ENCODE measurements at regions of chr2 and their contacts with region 1.

Region 1: GRCh38 chr2:197113275-197113711 is 186.8 kb upstream of the PGAP1 start:
- DNase-seq: no peak
- H3K4me3 ChIP-seq: no peak overlapping the region
- H3K27ac ChIP-seq: no peak overlapping the region
- H3K27me3 ChIP-seq: no peaks in the 10 kb centered on the region
- CTCF ChIP-seq: peak; percentile 63

Region 2: DNA sequence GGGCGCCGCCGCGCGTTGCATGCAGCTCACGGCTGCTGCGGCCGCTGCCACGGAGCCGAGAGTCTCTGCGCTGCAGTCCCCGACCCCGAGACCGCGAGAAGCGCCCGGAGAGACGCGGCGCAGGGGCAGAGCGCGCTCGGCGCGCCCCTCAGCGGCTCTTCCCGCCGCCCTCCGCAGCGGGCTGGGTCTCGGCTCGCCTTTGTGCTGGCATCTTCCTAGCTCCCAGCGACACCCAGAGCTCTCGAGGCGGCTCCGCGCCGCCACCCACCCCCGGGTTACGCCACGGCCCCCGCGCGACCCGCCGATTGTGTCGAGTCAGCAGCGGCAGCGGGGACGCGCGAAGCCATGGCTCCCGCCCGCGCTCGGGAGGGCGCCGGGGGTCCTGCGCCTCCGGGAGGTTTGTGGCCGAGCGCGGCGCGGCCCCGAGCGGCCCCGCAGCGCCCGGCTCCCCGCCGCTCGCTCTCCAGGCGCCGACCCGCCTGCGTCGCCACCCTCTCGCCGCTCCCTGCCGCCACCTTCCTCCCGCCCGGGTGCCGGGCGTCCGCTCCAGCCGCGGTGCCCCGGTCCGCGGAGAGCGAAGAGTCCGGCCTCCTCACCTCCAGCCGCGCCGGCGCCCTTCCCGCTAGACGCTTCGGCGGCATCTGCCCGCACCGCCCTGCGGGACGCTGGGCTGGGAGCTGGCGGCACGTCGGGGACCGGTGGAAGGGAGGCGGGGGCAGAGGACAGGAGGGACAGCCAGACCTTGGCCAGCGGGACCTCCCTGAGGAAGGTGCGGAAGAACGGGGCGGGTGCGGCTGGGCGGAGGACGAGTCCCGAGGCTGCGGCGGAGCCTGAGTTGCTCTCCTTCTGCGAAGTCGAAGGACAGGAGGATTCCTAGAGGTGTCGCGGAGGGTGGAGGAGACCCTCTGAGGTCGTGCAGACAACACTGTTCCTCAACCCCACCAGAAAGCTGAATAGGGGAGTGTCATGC is 520.1 kb before region 1 on chr2:
- CTCF ChIA-PET with region 1: no interaction called
- POLR2A ChIA-PET with region 1: no interaction called
- DNase-seq: no peak
- H3K4me3 ChIP-seq: peak within 1 kb of the TSS; percentile 75
- H3K27ac ChIP-seq: peak within 1 kb of the TSS; percentile 21
- H3K27me3 ChIP-seq: no peaks in the 10 kb centered on the region
- CTCF ChIP-seq: no peak

Region 3: DNA sequence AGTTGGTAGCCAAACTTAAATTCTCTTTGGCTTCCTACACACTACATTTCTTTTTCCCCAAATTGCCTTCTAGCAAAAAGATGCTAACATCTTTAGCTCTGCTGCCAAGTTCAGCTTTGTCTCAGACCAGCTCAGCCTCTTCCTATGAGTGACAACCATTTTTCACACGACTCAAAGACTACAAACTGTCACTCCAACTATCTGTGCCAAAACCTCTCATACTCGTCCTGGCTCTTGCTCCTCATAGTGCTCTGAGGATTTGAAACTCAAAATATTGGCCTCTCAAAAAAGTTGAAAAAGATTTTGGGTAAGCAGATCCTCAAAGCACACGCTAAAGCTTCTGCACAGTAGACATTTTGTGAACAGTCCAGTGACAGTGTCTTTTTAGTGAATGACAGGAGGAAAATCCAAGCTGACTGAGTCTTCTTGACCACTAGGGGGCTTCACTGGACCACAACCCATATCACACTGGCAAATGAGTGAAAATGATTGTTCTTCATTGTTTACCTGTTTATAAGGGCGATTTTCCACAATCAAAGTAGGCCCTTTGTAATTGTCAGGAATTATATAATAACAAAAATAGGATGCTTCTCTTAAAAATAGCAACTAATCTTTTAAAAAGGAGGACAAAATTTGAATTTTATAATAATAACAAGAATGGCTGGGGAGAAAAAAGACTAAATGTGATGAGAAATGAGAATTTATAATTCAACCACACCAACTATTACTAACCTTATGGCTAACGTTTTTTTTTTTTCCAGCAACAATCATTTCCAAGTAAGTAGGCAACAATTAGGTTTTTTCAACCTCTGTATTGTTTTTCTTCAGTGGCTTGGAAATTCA is 101.3 kb before region 1 on chr2:
- CTCF ChIA-PET with region 1: interaction called, 11 read pairs
- POLR2A ChIA-PET with region 1: no interaction called
- DNase-seq: no peak
- H3K4me3 ChIP-seq: no peak overlapping the region
- H3K27ac ChIP-seq: no peak overlapping the region
- H3K27me3 ChIP-seq: no peaks in the 10 kb centered on the region
- CTCF ChIP-seq: peak; percentile 91

Region 4: GRCh38 chr2:197097578-197098366 is 15.5 kb before region 1 on chr2:
- CTCF ChIA-PET with region 1: interaction called, 34 read pairs
- POLR2A ChIA-PET with region 1: no interaction called
- DNase-seq: peak; percentile 77
- H3K4me3 ChIP-seq: no peak overlapping the region
- H3K27ac ChIP-seq: no peak overlapping the region
- H3K27me3 ChIP-seq: no peaks in the 10 kb centered on the region
- CTCF ChIP-seq: no peak

Region 5: GRCh38 chr2:197152451-197153228 is 39.3 kb after region 1 on chr2:
- CTCF ChIA-PET with region 1: interaction called, 17 read pairs
- POLR2A ChIA-PET with region 1: no interaction called
- DNase-seq: no peak
- H3K4me3 ChIP-seq: no peak overlapping the region
- H3K27ac ChIP-seq: peak overlapping the region; percentile 43
- H3K27me3 ChIP-seq: no peaks in the 10 kb centered on the region
- CTCF ChIP-seq: peak; percentile 40

Region 6: GRCh38 chr2:197179744-197180498 is 66.6 kb after region 1 on chr2:
- CTCF ChIA-PET with region 1: interaction called, 18 read pairs
- POLR2A ChIA-PET with region 1: no interaction called
- DNase-seq: peak; percentile 52
- H3K4me3 ChIP-seq: no peak overlapping the region
- H3K27ac ChIP-seq: peak overlapping the region; percentile 79
- H3K27me3 ChIP-seq: no peaks in the 10 kb centered on the region
- CTCF ChIP-seq: no peak

Region 7: GRCh38 chr2:197310271-197310985 is 197.1 kb after region 1 on chr2 and contains the start of gene ANKRD44:
- CTCF ChIA-PET with region 1: interaction called, 25 read pairs
- POLR2A ChIA-PET with region 1: no interaction called
- DNase-seq: peak; percentile 55
- H3K4me3 ChIP-seq: peak within 1 kb of the TSS; percentile 75
- H3K27ac ChIP-seq: no peak within 1 kb of the TSS
- H3K27me3 ChIP-seq: no peaks in the 10 kb centered on the region
- CTCF ChIP-seq: peak; percentile 10; the same call in 1 of the 2 replicates
- polyA plus RNA-seq, gene ANKRD44: 12.1 and 14.7 TPM in 2 replicates

Region 8: DNA sequence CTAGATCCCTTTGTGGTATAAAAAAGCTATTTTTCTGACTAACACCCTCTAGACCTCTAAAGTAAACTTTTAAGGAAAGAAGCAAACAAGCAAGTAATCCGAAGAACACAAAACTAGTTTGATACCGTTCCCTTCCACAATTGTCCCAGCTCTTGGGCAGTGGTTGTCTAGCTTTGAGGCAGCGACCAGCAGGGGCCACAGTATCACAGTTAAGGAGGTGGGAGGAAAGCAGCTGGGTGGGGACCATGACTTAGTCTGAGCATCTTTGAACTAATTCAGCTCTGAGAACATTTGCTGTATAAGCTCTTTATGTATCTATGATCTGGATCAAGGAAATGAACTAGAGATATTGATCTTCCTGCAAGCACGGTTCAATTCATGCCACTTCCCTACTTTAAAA is 270.5 kb after region 1 on chr2:
- CTCF ChIA-PET with region 1: interaction called, 89 read pairs
- POLR2A ChIA-PET with region 1: no interaction called
- DNase-seq: no peak
- H3K4me3 ChIP-seq: no peak overlapping the region
- H3K27ac ChIP-seq: no peak overlapping the region
- H3K27me3 ChIP-seq: no peaks in the 10 kb centered on the region
- CTCF ChIP-seq: no peak

Measured in AG04450 (cell line).